A549 (cell line): ENCODE measurements at regions of chr10 and their contacts with region 1.

Region 1: GRCh38 chr10:5548527-5549223 is 23.9 kb downstream of the CALML3 start:
- DNase-seq: peak; percentile 96 to 98
- ATAC-seq: peak; percentile 75 to 77
- H3K4me3 ChIP-seq: peak overlapping the region; percentile 20; the same call in 1 of the 3 replicates
- H3K27ac ChIP-seq: peak overlapping the region; percentile 92 to 96
- H3K4me1 ChIP-seq: peaks cover 68% of the 10 kb centered on the region
- CTCF ChIP-seq: no peak
- EP300 ChIP-seq: peak; percentile 30 to 46; a peak in 2 of 5 replicates
- POLR2A ChIP-seq: no peak
- RAD21 ChIP-seq: peak; percentile 8 to 9; a peak in 1 of 5 replicates

Region 2: GRCh38 chr10:5446390-5446926 is 102.2 kb before region 1 on chr10:
- CTCF ChIA-PET with region 1: interaction called, 24 read pairs
- POLR2A ChIA-PET with region 1: interaction called, 43 read pairs
- DNase-seq: peak; percentile 76 to 89
- ATAC-seq: peak; percentile 95 to 96
- H3K4me3 ChIP-seq: peak overlapping the region; percentile 61
- H3K27ac ChIP-seq: peak overlapping the region; percentile 73 to 84
- H3K4me1 ChIP-seq: peaks cover 35% of the 10 kb centered on the region
- CTCF ChIP-seq: no peak
- EP300 ChIP-seq: no peak
- POLR2A ChIP-seq: peak; percentile 99
- RAD21 ChIP-seq: peak; percentile 31 to 40; a peak in 2 of 5 replicates

Region 3: DNA sequence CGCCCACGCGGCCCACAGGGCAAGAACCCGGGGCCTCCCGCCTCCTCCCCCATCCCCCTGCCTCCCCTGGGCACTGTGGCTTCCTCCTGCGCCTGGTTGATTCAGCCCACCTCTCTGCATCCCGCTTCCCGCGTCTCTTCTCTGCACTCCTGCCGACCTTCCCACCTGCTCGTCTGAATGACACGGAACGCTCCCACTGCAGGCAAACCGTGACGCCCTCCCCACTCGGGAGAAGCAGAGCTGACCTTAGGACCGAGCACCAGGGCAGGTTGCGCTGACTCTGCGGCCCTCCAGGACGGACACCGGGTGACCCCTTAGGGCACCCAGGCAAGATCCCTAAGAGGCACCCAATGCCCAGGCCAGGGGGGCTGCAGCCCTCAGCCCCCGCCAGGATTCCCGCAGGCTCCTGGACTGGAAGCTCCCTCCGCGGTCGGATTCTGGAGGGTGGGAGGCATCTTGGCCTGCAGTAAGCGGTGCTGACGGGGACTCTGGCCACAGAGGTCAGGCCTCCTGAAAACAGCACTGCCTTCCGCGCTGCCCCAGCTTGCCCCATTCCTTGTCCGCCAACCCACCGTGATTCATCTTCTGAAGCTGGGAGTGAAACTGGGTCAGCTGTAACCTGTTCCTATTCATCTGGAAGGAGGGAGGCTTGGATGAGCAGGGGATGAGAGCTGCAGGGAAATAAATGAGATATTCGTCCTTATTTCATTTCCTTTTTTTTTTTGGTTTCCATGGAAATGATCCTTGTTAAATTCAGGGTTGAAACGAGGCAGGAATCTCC is 22.9 kb before region 1 on chr10:
- CTCF ChIA-PET with region 1: no interaction called
- POLR2A ChIA-PET with region 1: no interaction called
- DNase-seq: no peak
- ATAC-seq: no peak
- H3K4me3 ChIP-seq: no peak overlapping the region
- H3K27ac ChIP-seq: no peak overlapping the region
- H3K4me1 ChIP-seq: no peaks in the 10 kb centered on the region
- CTCF ChIP-seq: no peak
- EP300 ChIP-seq: no peak
- POLR2A ChIP-seq: no peak
- RAD21 ChIP-seq: no peak

Region 4: DNA sequence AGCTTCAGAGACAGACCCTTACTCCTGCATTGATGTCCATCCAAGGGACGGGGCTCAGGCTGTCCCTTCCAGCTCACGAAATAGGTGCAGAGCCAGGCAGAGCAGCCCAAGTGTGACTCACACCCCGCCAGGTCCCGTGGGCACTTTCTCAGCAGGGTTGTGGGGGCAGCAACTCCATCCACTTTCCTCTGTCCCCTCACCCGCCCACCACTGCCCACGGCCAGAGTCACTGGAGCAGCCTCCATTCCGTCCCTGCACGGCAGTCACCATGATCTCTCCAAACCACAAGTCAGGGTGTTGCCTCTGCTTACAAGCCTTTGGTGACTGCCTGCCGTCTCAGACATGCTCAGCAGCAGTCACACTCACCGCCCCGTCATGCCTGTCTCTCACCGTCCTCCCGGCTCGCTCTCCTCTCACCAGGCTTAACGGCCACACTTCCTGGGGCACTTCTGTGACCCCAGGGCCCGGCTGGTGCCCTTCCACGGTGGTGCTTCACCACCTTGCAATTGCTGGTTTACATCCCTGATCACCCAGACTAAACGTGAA is 15.4 kb after region 1 on chr10:
- CTCF ChIA-PET with region 1: interaction called, 17 read pairs
- POLR2A ChIA-PET with region 1: no interaction called
- DNase-seq: no peak
- ATAC-seq: no peak
- H3K4me3 ChIP-seq: no peak overlapping the region
- H3K27ac ChIP-seq: peak overlapping the region in 1 of 2 experiments; percentile 43; a peak in 2 of 6 replicates
- H3K4me1 ChIP-seq: peaks cover 15% of the 10 kb centered on the region
- CTCF ChIP-seq: no peak
- EP300 ChIP-seq: no peak
- POLR2A ChIP-seq: no peak
- RAD21 ChIP-seq: no peak

Region 5: DNA sequence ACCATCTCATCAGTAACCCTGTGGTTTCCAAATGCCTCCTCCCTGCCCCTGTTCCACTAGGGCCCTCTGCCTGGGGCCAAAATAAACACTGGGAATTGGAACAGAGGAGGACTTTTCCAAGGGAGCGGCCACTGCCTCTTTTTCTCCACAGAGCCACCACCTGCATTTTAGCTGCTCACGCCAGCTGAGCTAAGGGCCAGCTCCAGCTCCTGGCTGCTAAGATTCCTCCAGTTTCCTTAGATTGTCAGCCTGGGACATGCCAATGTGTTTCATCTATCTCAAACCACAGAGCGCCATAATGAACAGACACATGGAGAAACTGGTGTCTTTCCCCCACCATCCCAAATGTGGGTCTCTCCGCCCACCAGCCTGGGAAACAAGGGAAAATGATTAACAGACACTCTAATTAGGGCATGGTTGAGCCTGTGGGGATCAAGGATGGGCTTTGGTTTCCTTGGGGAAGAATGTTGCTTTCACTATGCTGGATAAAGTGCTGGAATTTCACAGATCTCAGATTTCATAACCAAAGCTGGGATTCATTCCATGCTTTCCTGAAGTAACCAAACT is 65.6 kb after region 1 on chr10:
- CTCF ChIA-PET with region 1: interaction called, 5 read pairs
- POLR2A ChIA-PET with region 1: interaction called, 13 read pairs
- DNase-seq: no peak
- ATAC-seq: no peak
- H3K4me3 ChIP-seq: no peak overlapping the region
- H3K27ac ChIP-seq: peak overlapping the region; percentile 57 to 91
- H3K4me1 ChIP-seq: peaks cover 59% of the 10 kb centered on the region
- CTCF ChIP-seq: no peak
- EP300 ChIP-seq: no peak
- POLR2A ChIP-seq: no peak
- RAD21 ChIP-seq: no peak

Region 6: DNA sequence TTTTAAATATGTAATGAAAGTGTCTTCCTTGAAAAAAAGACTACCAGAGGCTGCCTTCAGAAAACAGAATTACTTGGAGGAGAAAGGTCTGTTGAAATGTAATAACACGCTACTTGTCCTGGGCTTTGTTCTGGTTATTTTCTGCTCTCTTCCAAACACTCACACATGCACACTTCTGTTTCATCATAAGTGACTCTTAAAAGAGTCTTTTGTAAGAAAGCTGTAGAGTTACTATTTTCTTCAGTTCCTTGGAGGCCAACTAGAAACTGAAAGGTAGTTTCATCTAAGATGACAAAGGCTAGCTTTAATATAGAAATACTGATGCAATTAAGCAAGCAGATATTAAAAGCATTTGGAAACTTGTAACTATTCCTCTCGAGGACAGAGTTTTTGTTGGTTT is 175.0 kb after region 1 on chr10:
- CTCF ChIA-PET with region 1: no interaction called
- POLR2A ChIA-PET with region 1: no interaction called
- DNase-seq: no peak
- ATAC-seq: no peak
- H3K4me3 ChIP-seq: no peak overlapping the region
- H3K27ac ChIP-seq: no peak overlapping the region
- H3K4me1 ChIP-seq: no peaks in the 10 kb centered on the region
- CTCF ChIP-seq: no peak
- EP300 ChIP-seq: no peak
- POLR2A ChIP-seq: no peak
- RAD21 ChIP-seq: no peak